ENCODE measurements at regions of chr20 and their contacts with region 1.

Region 1: GRCh38 chr20:43824309-43825050 is 90.2 kb upstream of the TOX2 start:
- DNase-seq: no peak
- H3K4me3 Mint-ChIP-seq: no peak overlapping the region
- H3K27ac Mint-ChIP-seq: no peak overlapping the region
- H3K4me1 Mint-ChIP-seq: peaks cover 10% of the 10 kb centered on the region
- H3K27me3 Mint-ChIP-seq: peaks cover 10% of the 10 kb centered on the region

Region 2: DNA sequence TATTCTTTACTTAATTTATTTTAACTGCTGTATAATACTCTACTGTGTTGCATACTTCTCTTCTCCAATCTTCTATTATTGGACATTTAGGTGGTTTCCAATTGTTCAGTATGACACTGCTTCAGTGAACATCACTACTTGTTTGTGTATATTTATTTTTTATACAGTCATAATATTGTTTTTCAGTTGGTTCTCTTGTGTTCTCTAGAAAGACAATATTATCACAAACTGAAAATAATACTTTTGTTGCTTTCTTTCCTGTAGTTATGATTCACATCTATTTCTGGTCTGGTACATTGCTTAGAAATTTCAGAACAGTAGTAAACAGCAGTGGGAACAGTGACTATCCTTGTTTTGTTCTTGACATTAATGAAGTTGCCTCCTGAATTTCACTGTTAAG is 34.9 kb before region 1 on chr20:
- CTCF ChIA-PET with region 1: no interaction called
- POLR2A ChIA-PET with region 1: no interaction called
- intact Hi-C with region 1: loop called (anchors 1 kb)
- DNase-seq: no peak
- H3K4me3 Mint-ChIP-seq: no peak overlapping the region
- H3K27ac Mint-ChIP-seq: no peak overlapping the region
- H3K4me1 Mint-ChIP-seq: peaks cover 10% of the 10 kb centered on the region
- H3K27me3 Mint-ChIP-seq: peaks cover 2% of the 10 kb centered on the region

Region 3: GRCh38 chr20:43840382-43841070 is 16.0 kb after region 1 on chr20:
- CTCF ChIA-PET with region 1: interaction called, 10 read pairs
- POLR2A ChIA-PET with region 1: no interaction called
- intact Hi-C with region 1: loop called (anchors 1 kb)
- DNase-seq: peak; percentile 64
- H3K4me3 Mint-ChIP-seq: no peak overlapping the region
- H3K27ac Mint-ChIP-seq: no peak overlapping the region
- H3K4me1 Mint-ChIP-seq: peaks cover 31% of the 10 kb centered on the region
- H3K27me3 Mint-ChIP-seq: peaks cover 20% of the 10 kb centered on the region

Region 4: GRCh38 chr20:44028868-44029847 is 204.7 kb after region 1 on chr20:
- CTCF ChIA-PET with region 1: interaction called, 3 read pairs
- POLR2A ChIA-PET with region 1: no interaction called
- intact Hi-C with region 1: loop called (anchors 5 kb)
- DNase-seq: peak; percentile 71
- H3K4me3 Mint-ChIP-seq: peak overlapping the region; percentile 46
- H3K27ac Mint-ChIP-seq: peak overlapping the region; percentile 3
- H3K4me1 Mint-ChIP-seq: peaks cover 39% of the 10 kb centered on the region
- H3K27me3 Mint-ChIP-seq: peaks cover 20% of the 10 kb centered on the region